ENCODE measurements at regions of chr16 and their contacts with region 1.

Region 1: DNA sequence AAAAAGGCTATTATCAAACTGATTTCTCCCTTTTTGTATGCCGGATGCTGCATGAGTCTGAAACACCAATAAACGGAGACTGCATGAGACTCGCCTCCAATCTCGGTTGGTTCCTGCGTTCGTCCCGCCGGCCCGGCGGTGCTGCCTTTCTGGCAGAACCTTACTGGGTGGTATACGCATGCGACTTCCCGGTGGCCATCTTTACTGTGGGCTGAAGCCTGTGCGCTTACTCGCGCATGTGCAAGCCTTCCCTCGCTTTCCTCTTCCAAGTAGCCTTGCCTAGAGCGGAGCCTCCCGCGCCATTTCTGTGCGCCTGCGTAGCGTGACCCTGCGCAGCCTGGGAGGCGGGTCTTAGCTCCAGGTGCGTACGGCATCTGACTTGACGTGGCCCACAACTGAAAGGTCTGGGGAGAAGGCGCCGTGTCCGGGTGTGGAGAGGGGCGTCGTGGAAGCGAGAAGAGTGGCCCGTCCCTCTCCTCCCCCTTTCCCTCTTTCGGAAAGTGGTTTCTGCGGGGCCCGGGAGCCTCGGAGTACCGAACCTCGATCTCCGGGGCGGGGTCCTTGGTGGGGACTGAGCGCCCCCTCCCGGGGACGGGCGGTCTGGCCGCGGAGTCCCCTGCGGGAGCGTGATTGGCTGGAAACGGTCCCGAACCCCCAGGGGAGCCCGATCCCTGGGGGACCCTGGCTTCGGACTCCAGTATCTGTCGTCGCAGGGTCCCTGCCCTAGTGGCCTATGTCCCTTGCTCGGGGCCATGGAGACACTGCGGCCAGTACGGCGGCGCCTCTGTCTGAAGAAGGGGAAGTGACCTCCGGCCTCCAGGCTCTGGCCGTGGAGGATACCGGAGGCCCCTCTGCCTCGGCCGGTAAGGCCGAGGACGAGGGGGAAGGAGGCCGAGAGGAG is at the start of gene PAGR1:
- DNase-seq: peak; percentile 99
- H3K4me3 ChIP-seq: peak within 1 kb of the TSS; percentile 67 to 81 (median 69)
- H3K27ac ChIP-seq: peak within 1 kb of the TSS; percentile 70
- H3K4me1 ChIP-seq: peaks cover 37% of the 10 kb centered on the region
- H3K27me3 ChIP-seq: no peaks in the 10 kb centered on the region
- CTCF ChIP-seq: peak; percentile 64 to 96
- total RNA-seq, gene PAGR1: 13.7 to 24.9 TPM

Region 2: GRCh38 chr16:29836623-29837022 is 20.6 kb after region 1 on chr16:
- CTCF ChIA-PET with region 1: no interaction called
- dilution Hi-C with region 1: no loop called
- in situ Hi-C with region 1: no loop called
- intact Hi-C with region 1: no loop called
- DNase-seq: no peak
- H3K4me3 ChIP-seq: no peak overlapping the region
- H3K27ac ChIP-seq: no peak overlapping the region
- H3K4me1 ChIP-seq: no peaks in the 10 kb centered on the region
- H3K27me3 ChIP-seq: no peaks in the 10 kb centered on the region
- CTCF ChIP-seq: no peak

Region 3: GRCh38 chr16:29848420-29849297 is 32.6 kb after region 1 on chr16:
- CTCF ChIA-PET with region 1: interaction called, 4 read pairs
- dilution Hi-C with region 1: no loop called
- in situ Hi-C with region 1: no loop called
- intact Hi-C with region 1: loop called (anchors 2 kb)
- DNase-seq: peak; percentile 39
- H3K4me3 ChIP-seq: no peak overlapping the region
- H3K27ac ChIP-seq: no peak overlapping the region
- H3K4me1 ChIP-seq: no peaks in the 10 kb centered on the region
- H3K27me3 ChIP-seq: no peaks in the 10 kb centered on the region
- CTCF ChIP-seq: peak; percentile 86 to 89

Region 4: DNA sequence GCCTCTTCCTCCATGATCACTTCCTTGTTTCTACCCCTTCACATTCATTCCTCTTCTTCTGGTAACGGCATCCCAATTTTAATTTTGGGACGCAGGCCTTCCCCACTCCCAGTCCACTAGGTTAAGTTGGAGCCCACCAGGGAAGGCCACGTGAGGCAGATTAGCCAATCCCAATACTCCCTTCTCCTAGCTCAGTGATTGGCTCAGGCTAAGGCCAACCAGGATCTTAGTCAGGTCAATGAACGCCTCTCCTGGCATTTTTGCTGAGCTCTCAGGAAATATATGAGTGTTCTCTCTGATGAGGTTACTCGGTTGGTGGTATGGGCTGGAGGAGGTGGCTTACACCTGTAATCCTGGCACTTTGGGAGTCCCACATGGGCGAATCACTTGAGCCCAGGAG is 67.9 kb after region 1 on chr16:
- CTCF ChIA-PET with region 1: no interaction called
- dilution Hi-C with region 1: no loop called
- in situ Hi-C with region 1: no loop called
- intact Hi-C with region 1: no loop called
- DNase-seq: no peak
- H3K4me3 ChIP-seq: no peak overlapping the region
- H3K27ac ChIP-seq: no peak overlapping the region
- H3K4me1 ChIP-seq: no peaks in the 10 kb centered on the region
- H3K27me3 ChIP-seq: no peaks in the 10 kb centered on the region
- CTCF ChIP-seq: no peak

Region 5: DNA sequence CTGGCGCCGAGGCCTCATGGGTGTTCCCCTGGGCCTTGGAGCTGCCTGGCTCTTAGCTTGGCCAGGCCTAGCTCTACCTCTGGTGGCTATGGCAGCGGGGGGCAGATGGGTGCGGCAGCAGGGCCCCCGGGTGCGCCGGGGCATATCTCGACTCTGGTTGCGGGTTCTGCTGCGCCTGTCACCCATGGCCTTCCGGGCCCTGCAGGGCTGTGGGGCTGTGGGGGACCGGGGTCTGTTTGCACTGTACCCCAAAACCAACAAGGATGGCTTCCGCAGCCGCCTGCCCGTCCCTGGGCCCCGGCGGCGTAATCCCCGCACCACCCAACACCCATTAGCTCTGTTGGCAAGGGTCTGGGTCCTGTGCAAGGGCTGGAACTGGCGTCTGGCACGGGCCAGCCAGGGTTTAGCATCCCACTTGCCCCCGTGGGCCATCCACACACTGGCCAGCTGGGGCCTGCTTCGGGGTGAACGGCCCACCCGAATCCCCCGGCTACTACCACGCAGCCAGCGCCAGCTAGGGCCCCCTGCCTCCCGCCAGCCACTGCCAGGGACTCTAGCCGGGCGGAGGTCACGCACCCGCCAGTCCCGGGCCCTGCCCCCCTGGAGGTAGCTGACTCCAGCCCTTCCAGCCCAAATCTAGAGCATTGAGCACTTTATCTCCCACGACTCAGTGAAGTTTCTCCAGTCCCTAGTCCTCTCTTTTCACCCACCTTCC is 171.5 kb after region 1 on chr16:
- CTCF ChIA-PET with region 1: no interaction called
- dilution Hi-C with region 1: no loop called
- in situ Hi-C with region 1: no loop called
- intact Hi-C with region 1: no loop called
- DNase-seq: no peak
- H3K4me3 ChIP-seq: no peak overlapping the region
- H3K27ac ChIP-seq: no peak overlapping the region
- H3K4me1 ChIP-seq: no peaks in the 10 kb centered on the region
- H3K27me3 ChIP-seq: no peaks in the 10 kb centered on the region
- CTCF ChIP-seq: no peak

Region 6: DNA sequence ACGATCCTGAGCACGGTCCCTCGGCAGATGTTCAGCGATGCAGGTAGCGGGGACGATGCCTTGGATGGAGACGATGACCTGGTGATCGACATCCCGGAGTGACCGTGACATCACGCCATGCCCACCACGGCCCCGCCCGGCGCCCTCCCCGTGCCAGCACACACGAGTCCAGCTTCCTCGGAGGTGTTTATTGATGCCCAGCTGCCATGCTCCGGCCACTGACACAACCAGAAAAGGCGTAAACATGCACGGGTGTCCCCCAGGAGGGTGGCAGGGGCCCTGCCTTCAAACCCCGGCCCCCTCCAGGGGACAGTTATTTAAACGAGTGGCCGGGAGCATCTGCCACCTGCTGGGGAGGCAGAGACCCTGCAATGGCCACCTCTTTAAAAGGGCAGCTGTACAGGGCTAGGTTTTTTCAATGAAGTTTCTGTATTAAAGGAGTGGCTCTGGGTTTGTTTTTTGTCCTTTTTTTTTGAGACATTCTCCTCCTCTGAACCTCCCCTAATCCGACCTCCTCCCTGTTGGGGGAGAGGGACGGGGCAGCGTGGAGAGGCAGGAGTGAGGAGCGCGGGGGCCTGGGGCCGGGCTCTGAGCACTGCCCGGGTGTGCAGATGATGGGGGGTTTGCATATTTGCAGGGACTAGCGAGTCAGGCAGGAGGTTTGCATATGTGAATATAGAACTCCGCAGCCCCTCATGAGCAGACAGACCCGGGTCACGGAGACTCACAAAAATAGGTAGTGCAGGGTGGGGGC is 189.5 kb after region 1 on chr16:
- CTCF ChIA-PET with region 1: no interaction called
- dilution Hi-C with region 1: no loop called
- in situ Hi-C with region 1: loop called in 1 of 2 experiments (anchors 25 kb)
- intact Hi-C with region 1: no loop called
- DNase-seq: no peak
- H3K4me3 ChIP-seq: no peak overlapping the region
- H3K27ac ChIP-seq: no peak overlapping the region
- H3K4me1 ChIP-seq: peaks cover 2% of the 10 kb centered on the region
- H3K27me3 ChIP-seq: peaks cover 6% of the 10 kb centered on the region
- CTCF ChIP-seq: peak; percentile 71 to 76

Region 7: DNA sequence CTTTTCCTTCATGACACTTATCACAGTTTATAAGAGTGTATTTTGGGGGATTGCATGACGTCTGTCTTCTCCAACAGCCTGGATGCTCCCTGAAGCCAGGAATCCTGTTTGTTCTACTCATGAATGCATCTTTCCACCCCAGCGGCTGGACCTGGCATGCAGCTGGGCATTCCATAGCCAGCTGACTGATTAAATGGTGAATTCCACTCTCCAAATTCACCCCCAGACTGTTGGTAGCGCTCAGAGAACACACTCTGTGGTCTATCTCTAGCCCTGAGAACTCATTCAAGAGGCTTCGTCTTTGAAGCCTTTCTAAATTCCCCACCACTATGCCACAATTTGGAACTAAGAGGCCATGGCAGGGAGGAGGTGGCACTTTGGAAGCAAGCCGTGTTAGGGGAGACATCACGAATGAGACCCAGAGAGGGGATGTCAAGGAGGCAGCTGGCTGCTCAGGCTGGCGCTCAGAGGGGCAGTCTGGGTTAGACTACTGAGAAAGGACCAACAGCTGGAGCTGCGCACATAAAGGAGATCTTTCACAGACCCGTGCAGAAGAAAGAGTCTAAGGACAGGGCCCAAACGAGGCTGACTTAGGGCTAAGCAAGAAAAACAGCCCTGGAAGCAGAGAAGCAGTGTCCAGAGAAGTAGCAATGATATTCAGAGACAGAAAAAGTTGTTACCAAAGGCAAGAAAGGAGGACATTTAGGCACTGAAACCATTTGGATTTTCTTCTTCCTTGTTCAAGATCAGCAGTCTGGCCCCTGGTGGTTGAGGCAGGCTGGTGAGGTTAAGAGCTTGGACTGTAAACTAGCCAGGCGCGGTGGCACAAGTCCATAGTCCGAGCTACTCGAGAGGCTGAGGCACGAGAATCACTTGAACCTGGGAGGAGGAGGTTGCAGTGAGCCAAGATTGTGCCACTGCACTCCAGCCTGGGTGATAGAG is 1013.4 kb after region 1 on chr16:
- CTCF ChIA-PET with region 1: interaction called, 10 read pairs
- dilution Hi-C with region 1: no loop called
- in situ Hi-C with region 1: no loop called
- intact Hi-C with region 1: no loop called
- DNase-seq: no peak
- H3K4me3 ChIP-seq: no peak overlapping the region
- H3K27ac ChIP-seq: no peak overlapping the region
- H3K4me1 ChIP-seq: peaks cover under 1% of the 10 kb centered on the region
- H3K27me3 ChIP-seq: no peaks in the 10 kb centered on the region
- CTCF ChIP-seq: no peak

Measured in mammary epithelial cell (primary cell).